PC-3 (cell line): ENCODE measurements at regions of chr9 and their contacts with region 1.

Region 1: DNA sequence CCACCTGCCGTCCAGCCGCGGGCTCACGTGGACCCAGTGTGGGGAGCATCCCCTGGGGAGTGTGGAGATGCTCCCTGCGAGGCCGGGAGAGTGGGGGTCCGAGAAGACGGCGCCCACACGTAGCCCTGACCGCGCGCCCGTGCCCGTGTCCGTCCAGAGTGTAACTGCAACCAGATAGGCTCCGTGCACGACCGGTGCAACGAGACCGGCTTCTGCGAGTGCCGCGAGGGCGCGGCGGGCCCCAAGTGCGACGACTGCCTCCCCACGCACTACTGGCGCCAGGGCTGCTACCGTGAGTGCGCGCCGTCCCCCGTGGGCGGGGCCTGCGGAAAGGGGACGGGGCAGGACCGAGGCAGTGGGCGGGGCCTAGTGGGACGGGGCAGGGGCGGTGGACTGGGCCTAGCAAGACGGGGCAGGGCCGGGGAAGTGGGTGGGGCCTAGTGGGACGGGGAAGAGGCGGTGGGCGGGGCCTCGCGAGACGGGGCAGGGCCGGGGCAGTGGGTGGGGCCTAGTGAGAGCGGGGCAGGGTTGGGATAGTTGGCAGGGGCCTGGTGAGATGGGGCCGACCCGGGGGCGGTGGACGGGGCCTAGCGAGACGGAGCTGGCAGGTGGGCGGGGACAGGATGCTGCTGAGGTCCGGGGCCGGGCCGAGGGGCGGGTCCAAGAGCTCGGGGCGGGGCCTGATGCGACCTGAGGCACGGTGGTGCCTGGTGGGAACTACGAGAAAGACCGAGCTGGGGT is 79.1 kb downstream of the NTNG2 start:
- DNase-seq: peak; percentile 76
- ATAC-seq: peak; percentile 78
- H3K4me3 ChIP-seq: peak overlapping the region; percentile 67
- H3K27ac ChIP-seq: no peak overlapping the region
- H3K4me1 ChIP-seq: no peaks in the 10 kb centered on the region; the same call in 1 of the 2 replicates
- H3K27me3 ChIP-seq: no peaks in the 10 kb centered on the region
- CTCF ChIP-seq: no peak

Region 2: DNA sequence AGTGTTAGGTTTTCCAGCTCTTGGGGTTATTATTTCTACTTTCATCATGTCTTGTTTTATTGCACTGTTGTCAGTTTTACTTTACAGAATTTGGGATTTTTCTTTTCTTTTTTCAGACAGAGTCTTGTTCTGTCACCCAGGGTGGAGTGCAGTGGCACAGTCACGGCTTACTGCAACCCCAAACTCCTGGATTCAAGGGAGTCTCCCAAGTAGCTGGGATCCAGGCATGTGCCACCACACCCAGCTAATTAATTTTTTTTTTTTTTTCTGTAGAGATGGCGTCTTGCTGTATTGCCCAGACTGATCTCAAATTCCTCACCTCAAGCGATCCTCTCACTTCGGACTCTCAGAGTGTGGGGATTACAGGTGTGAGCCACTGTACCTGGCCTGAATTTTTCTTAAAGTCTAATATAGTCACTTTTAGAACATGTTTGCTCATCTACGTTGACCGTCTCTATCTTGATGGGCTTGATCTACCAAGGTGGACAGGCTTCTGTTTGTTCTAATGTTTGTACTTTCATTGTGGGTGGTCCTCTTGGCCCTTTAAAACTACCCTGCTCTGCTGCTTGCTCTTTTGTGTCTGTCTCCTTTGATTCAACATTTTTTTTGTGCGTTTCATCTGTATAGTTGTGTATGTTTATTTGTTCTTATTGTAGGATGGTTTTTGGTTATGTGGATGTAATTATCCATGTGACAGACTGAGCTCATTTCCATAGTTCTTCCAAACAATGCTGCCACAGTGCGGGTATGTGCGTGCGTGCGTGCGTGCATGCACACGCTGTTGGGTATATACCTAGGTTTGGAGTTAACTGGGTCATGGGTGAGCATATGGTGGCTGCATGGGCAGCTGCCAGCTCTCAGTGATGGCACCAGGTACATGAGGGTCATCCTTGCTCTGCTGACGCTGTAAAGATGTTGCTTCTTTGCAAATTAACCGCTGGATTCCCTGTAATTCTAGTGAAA is 828.9 kb before region 1 on chr9:
- CTCF ChIA-PET with region 1: no interaction called
- POLR2A ChIA-PET with region 1: interaction called, 20 read pairs
- intact Hi-C with region 1: no loop called
- DNase-seq: no peak
- ATAC-seq: no peak
- H3K4me3 ChIP-seq: no peak overlapping the region
- H3K27ac ChIP-seq: no peak overlapping the region
- H3K4me1 ChIP-seq: no peaks in the 10 kb centered on the region
- H3K27me3 ChIP-seq: no peaks in the 10 kb centered on the region
- CTCF ChIP-seq: no peak

Region 3: GRCh38 chr9:131762356-131762932 is 478.5 kb before region 1 on chr9:
- CTCF ChIA-PET with region 1: interaction called, 4 read pairs
- POLR2A ChIA-PET with region 1: no interaction called
- intact Hi-C with region 1: loop called (anchors 1 kb)
- DNase-seq: peak; percentile 58
- ATAC-seq: peak; percentile 88
- H3K4me3 ChIP-seq: no peak overlapping the region
- H3K27ac ChIP-seq: no peak overlapping the region
- H3K4me1 ChIP-seq: 0 out of 2 replicates have a peak, but pooled peaks cover 3% of the 10 kb centered on the region
- H3K27me3 ChIP-seq: peaks cover 16% of the 10 kb centered on the region
- CTCF ChIP-seq: peak; percentile 78

Region 4: DNA sequence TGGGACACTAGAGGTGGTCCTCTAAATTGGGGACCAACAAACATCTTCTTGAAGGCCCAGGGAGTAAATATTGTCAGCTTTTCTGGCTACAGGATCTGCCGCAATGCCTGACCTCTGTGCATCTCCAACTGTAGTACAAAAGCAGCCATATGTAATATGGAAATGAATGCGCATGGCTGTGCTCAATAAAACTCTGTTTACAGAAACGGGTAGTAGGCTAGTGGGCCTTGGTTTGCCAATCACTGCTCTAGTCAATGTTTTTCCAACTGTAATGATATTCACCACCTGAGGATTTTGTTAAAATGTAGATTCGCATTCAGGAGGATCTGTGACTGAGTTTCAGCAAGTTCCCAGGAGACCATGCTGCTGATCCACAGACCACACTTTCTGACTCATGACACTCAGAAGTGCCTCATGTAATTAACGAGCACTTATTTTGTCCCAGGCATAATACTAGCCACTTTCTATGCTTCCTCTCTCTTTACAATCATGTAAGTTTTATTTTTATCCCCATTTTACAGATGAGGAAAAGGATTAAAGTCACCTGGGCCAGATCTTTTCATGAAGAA is 258.2 kb before region 1 on chr9:
- CTCF ChIA-PET with region 1: interaction called, 3 read pairs
- POLR2A ChIA-PET with region 1: no interaction called
- intact Hi-C with region 1: loop called (anchors 5 kb)
- DNase-seq: no peak
- ATAC-seq: no peak
- H3K4me3 ChIP-seq: no peak overlapping the region
- H3K27ac ChIP-seq: no peak overlapping the region
- H3K4me1 ChIP-seq: peaks cover 43% of the 10 kb centered on the region
- H3K27me3 ChIP-seq: no peaks in the 10 kb centered on the region
- CTCF ChIP-seq: no peak

Region 5: GRCh38 chr9:132169672-132170392 is 71.1 kb before region 1 on chr9:
- CTCF ChIA-PET with region 1: interaction called, 26 read pairs
- POLR2A ChIA-PET with region 1: no interaction called
- intact Hi-C with region 1: loop called (anchors 1 kb)
- DNase-seq: peak; percentile 41
- ATAC-seq: peak; percentile 62
- H3K4me3 ChIP-seq: no peak overlapping the region
- H3K27ac ChIP-seq: no peak overlapping the region
- H3K4me1 ChIP-seq: no peaks in the 10 kb centered on the region
- H3K27me3 ChIP-seq: peaks cover 16% of the 10 kb centered on the region
- CTCF ChIP-seq: peak; percentile 83